GM12878 (cell line): ENCODE measurements at regions of chr3 and their contacts with region 1.

Region 1: DNA sequence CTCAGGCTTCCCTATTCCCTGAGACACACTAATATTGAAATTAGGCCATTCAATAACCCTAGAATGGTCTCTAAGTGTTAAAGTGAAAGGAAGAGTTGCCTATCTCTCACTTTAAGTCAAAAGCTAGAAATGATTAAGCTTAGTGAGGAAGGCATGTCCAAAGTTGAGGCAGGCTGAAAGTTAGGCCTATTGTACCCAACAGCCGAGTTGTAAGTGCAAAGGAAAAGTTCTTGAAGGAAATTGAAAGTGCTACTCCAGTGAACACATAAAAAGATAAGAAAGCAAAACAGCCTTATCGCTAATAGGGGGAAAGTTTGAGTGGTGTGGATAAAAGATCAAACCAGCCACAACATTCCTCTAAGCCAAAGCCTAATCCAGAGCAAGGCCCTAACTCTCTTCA is 117.9 kb upstream of the SPATA12 start:
- DNase-seq: no peak
- ATAC-seq: peak; percentile 79
- H3K4me3 ChIP-seq: no peak overlapping the region
- H3K27ac ChIP-seq: no peak overlapping the region
- H3K4me1 ChIP-seq: peaks cover 10% of the 10 kb centered on the region
- H3K27me3 ChIP-seq: no peaks in the 10 kb centered on the region
- CTCF ChIP-seq: no peak
- EP300 ChIP-seq: no peak
- POLR2A ChIP-seq: no peak
- RAD21 ChIP-seq: no peak

Region 2: DNA sequence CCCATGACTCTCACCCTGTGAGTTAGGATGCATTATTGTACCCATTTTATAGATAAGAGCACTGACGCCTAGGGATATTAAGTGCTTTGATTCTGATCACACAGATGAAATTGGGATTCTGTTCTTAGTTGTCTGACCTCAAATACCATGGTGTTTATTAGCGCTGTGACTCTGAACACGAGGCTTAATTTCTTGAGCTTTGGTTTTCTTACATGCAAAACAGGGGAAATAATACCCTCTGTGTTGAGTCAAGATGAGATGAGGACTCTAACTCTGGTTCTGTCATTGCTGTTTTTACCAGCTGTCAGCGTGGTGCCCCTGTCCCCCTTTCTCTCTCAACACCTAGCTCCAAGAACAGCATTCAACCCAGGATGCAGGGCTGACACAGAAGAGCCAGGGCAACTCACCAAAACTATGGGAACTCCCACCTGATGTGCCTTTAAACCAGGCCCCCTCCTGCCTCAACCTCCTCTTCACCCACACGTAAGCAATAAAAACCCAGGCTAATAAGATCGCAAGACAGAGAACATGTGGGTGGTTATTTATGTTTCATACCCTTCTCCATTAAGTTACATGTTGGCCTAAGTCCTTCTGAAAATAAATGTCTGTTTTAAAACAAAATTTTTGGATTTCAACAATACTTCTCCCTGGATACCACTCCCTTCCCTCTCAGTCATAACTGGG is 17.9 kb after region 1 on chr3:
- CTCF ChIA-PET with region 1: no interaction called
- POLR2A ChIA-PET with region 1: no interaction called
- RAD21 ChIA-PET with region 1: no interaction called
- SMC1A ChIA-PET with region 1: interaction called, 19 read pairs
- in situ Hi-C with region 1: no loop called
- intact Hi-C with region 1: no loop called
- DNase-seq: peak; percentile 39
- ATAC-seq: peak; percentile 88
- H3K4me3 ChIP-seq: no peak overlapping the region
- H3K27ac ChIP-seq: no peak overlapping the region
- H3K4me1 ChIP-seq: peaks cover 23% of the 10 kb centered on the region
- H3K27me3 ChIP-seq: no peaks in the 10 kb centered on the region
- CTCF ChIP-seq: no peak
- EP300 ChIP-seq: peak in 1 of 2 experiments; percentile 50; a peak in 1 of 4 replicates
- POLR2A ChIP-seq: no peak
- RAD21 ChIP-seq: no peak